Right ventricle myocardium superior (tissue), 1 donor: ENCODE measurements at regions of chr15 and their contacts with region 1.

Region 1: GRCh38 chr15:74438721-74439316 is 5.1 kb upstream of the SEMA7A start:
- DNase-seq: peak; percentile 82
- ATAC-seq: peak; percentile 70

Region 2: DNA sequence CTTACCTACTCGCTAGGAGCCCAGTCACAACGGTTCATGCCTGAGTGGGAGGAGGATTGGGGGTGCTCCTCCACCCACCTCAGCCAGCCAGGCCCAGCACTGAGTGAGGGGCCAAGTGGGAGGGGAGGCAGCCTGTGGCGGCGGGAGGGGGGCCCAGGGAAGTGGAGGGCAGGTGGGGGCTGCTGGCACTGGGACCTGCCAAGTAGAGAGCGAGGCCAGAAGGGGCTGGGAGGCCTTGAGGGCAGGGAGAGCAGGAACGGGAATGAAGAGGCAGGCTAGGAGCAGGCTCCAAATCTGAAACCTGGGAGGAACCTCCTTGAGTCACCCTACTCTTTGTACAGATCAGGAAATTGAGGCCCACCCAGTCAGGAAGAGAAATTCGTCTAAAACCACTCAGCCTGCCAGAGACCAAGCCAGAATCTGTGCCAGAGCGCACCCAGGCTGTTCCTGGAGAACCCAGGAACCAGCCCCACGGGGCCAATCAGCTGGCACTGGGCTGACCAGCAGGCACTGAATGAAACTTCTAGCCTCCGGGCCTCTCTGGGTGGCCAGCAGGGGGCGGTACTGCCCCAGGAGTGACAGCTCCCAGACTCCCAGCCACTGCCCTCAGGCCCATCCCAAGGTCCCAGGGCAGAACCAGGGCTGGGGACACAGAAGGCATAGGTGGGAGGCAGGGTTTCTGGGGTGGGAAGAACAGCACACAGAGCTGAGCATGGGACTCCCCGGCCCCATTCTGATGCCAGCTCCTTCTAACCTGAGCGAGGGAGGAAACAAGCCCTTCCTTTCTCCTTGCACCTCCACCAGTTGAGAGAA is 56.6 kb before region 1 on chr15:
- intact Hi-C with region 1: loop called (anchors 2 kb)
- DNase-seq: peak; percentile 92
- ATAC-seq: peak; percentile 96

Region 3: DNA sequence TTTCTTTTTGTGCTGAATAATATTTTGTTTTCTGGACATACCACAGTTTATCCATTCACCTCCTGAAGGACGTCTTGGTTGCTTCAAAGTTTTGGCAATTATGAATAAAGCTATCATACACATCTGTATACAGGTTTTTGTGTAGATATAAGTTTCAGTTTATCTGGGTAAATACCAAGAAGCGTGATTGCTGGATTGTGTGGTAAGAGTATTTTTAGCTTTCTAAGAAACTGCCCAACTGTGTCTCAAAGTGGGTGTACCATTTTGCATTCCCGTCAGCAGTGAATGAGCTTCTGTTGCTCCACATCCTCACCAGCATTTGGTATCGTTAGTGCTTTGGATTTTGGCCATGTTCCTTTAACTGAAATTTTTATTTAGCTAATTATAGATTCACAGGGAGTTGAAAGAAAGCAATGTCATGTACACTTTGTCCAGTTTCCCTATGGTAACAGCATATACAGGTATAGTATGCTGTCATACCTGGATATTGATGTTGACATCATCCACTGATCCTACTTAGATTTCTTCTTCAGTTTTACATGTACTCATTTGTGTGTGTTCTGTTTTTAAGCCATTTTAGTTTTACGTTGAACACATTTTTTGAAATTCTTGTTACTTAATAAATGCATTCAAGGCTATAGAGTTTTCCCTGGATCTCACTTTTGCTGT is 114.1 kb after region 1 on chr15:
- intact Hi-C with region 1: no loop called
- DNase-seq: no peak
- ATAC-seq: no peak